MCF 10A (cell line): ENCODE measurements at regions of chr3 and their contacts with region 1.

Region 1: DNA sequence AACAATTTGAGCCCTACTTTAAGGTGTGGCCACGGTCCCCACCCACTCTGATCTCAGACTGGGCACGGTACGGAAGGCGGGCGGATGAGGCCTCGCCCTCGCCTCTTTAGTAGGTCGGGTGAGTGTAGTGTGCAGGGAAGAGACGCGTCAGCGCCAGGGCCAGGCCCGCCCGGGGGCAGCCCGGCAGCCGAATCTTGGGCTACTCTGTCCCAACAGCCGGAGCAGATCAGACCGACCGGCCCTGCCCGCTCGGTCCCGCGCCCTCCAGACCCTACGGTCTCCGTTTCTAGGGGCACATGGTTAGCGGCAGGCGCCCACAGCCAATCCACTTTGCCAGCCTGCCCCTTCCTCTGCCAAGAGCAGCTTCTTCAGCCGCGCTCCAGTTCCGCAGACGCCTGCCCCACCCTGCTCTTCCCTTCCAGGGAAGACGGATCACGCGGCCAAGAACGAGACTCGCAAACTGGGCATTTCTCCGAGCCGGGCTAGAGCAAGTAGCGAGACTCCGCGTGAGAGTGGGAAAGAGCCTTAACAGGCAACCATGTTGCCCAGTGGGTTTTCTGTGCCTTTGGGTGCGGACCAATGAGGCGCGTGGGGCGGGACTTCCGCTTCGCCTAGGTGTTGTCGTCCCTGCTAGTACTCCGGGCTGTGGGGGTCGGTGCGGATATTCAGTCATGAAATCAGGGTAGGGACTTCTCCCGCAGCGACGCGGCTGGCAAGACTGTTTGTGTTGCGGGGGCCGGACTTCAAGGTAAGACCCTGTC is at the start of gene RNF13:
- DNase-seq: peak; percentile 94
- H3K4me3 Mint-ChIP-seq: peak within 1 kb of the TSS; percentile 83
- H3K27ac Mint-ChIP-seq: peak within 1 kb of the TSS; percentile 98
- H3K4me1 Mint-ChIP-seq: peaks cover 39% of the 10 kb centered on the region
- H3K27me3 Mint-ChIP-seq: no peaks in the 10 kb centered on the region
- CTCF ChIP-seq: no peak
- total RNA-seq, gene RNF13: 36.5 and 40.4 TPM in 2 replicates

Region 2: GRCh38 chr3:149512209-149512782 is 300.5 kb before region 1 on chr3:
- CTCF ChIA-PET with region 1: interaction called, 17 read pairs
- POLR2A ChIA-PET with region 1: interaction called, 3 read pairs
- intact Hi-C with region 1: loop called (anchors 1 kb)
- DNase-seq: peak; percentile 67
- H3K4me3 Mint-ChIP-seq: no peak overlapping the region
- H3K27ac Mint-ChIP-seq: no peak overlapping the region
- H3K4me1 Mint-ChIP-seq: peaks cover 19% of the 10 kb centered on the region
- H3K27me3 Mint-ChIP-seq: no peaks in the 10 kb centered on the region
- CTCF ChIP-seq: peak; percentile 61

Region 3: GRCh38 chr3:149752051-149752787 is 60.6 kb before region 1 on chr3 and contains the start of gene COMMD2:
- CTCF ChIA-PET with region 1: interaction called, 20 read pairs
- POLR2A ChIA-PET with region 1: interaction called, 27 read pairs
- intact Hi-C with region 1: no loop called
- DNase-seq: peak; percentile 91
- H3K4me3 Mint-ChIP-seq: peak within 1 kb of the TSS; percentile 84
- H3K27ac Mint-ChIP-seq: peak within 1 kb of the TSS; percentile 87
- H3K4me1 Mint-ChIP-seq: peaks cover 3% of the 10 kb centered on the region
- H3K27me3 Mint-ChIP-seq: no peaks in the 10 kb centered on the region
- CTCF ChIP-seq: peak; percentile 34
- total RNA-seq, gene COMMD2: 51.2 and 60.4 TPM in 2 replicates

Region 4: DNA sequence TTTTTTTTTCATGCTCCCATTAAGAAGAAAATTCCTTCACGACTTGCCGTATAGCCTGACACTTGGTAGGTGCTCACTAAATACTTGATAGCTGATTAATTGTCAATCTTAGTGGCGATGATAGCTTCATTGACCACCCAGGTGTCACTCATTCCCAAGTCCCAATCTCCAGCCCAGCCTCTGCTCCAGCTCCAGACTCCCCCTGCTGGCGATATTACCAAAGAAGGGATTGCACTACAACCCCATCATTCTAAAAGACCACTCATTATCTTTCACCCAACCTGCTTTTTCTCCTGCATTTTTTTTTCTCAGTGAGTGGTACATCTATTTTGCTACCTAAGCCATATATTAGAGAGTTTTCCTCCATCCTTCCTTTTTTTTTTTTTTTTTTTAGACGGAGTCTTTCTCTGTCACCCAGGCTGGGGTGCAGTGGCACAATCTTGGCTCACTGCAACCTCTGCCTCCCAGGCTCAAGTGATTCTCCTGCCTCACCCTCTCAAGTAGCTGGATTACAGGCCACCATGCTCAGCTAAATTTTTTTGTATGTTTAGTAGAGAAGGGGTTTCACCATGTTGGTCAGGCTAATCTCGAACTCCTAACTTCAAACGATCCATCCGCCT is 41.0 kb before region 1 on chr3:
- CTCF ChIA-PET with region 1: interaction called, 307 read pairs
- POLR2A ChIA-PET with region 1: interaction called, 28 read pairs
- intact Hi-C with region 1: no loop called
- DNase-seq: peak; percentile 56
- H3K4me3 Mint-ChIP-seq: no peak overlapping the region
- H3K27ac Mint-ChIP-seq: no peak overlapping the region
- H3K4me1 Mint-ChIP-seq: no peaks in the 10 kb centered on the region
- H3K27me3 Mint-ChIP-seq: no peaks in the 10 kb centered on the region
- CTCF ChIP-seq: peak; percentile 81

Region 5: DNA sequence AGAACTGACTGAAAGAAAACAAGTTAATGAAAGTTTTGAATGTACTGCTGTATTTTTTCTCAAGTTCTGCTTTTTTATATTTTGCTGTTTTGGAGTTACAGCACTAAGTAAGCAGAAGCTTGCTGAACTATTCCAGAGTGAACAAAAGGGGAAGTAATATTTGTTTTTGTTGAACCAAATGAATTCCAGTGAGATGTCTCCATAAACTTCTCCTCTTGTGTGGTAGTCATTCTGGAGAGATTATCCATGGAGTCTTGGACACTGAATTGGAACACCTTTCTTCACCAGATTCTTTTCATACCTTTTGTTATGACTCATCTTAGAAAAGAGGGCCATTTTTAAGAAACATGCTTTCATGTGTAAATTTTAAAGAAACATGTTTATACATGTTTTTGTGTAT is 29.2 kb before region 1 on chr3:
- CTCF ChIA-PET with region 1: interaction called, 22 read pairs
- POLR2A ChIA-PET with region 1: interaction called, 4 read pairs
- intact Hi-C with region 1: no loop called
- DNase-seq: peak; percentile 32
- H3K4me3 Mint-ChIP-seq: no peak overlapping the region
- H3K27ac Mint-ChIP-seq: peak overlapping the region; percentile 96
- H3K4me1 Mint-ChIP-seq: peaks cover 17% of the 10 kb centered on the region
- H3K27me3 Mint-ChIP-seq: no peaks in the 10 kb centered on the region
- CTCF ChIP-seq: no peak

Region 6: DNA sequence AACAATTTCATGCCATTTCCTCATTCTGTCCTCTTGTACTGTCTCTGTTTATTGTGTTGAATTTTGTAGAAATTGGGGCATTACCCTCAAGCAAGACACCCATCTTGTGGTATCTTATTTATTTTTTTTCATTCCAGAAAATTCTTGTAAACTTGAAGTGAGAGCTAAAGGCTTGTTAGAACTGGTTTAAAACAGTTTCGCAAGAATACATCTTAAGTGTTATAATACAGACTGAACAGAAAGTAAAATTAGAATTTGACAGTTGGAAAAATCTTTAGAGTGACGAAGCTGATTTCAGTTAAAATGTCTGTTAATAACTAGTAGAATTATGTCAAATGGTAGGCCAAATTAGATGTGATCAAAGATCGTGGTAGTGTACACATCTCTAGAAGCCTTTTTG is 27.1 kb after region 1 on chr3:
- CTCF ChIA-PET with region 1: interaction called, 12 read pairs
- POLR2A ChIA-PET with region 1: interaction called, 4 read pairs
- intact Hi-C with region 1: no loop called
- DNase-seq: peak; percentile 11
- H3K4me3 Mint-ChIP-seq: peak overlapping the region; percentile 50
- H3K27ac Mint-ChIP-seq: peak overlapping the region; percentile 90
- H3K4me1 Mint-ChIP-seq: peaks cover 27% of the 10 kb centered on the region
- H3K27me3 Mint-ChIP-seq: no peaks in the 10 kb centered on the region
- CTCF ChIP-seq: no peak

Region 7: GRCh38 chr3:149969940-149970715 is 157.3 kb after region 1 on chr3:
- CTCF ChIA-PET with region 1: interaction called, 3 read pairs
- POLR2A ChIA-PET with region 1: interaction called, 17 read pairs
- intact Hi-C with region 1: no loop called
- DNase-seq: peak; percentile 80
- H3K4me3 Mint-ChIP-seq: peak overlapping the region; percentile 80
- H3K27ac Mint-ChIP-seq: peak overlapping the region; percentile 84
- H3K4me1 Mint-ChIP-seq: peaks cover 28% of the 10 kb centered on the region
- H3K27me3 Mint-ChIP-seq: no peaks in the 10 kb centered on the region
- CTCF ChIP-seq: no peak